Left ventricle myocardium inferior (tissue), 1 donor: ENCODE measurements at regions of chr1 and their contacts with region 1.

Region 1: GRCh38 chr1:221741711-221742554 is at the start of gene DUSP10:
- DNase-seq: peak; percentile 98
- H3K4me3 ChIP-seq: peak within 1 kb of the TSS; percentile 80
- H3K27ac ChIP-seq: peak within 1 kb of the TSS; percentile 98
- H3K4me1 ChIP-seq: peaks cover 38% of the 10 kb centered on the region
- H3K27me3 ChIP-seq: no peaks in the 10 kb centered on the region
- CTCF ChIP-seq: no peak
- total RNA-seq, gene DUSP10: 4.6 TPM

Region 2: GRCh38 chr1:221543529-221544120 is 198.3 kb before region 1 on chr1:
- intact Hi-C with region 1: loop called (anchors 10 kb)
- DNase-seq: no peak
- H3K4me3 ChIP-seq: no peak overlapping the region
- H3K27ac ChIP-seq: no peak overlapping the region
- H3K4me1 ChIP-seq: no peaks in the 10 kb centered on the region
- H3K27me3 ChIP-seq: peaks cover 2% of the 10 kb centered on the region
- CTCF ChIP-seq: peak; percentile 71

Region 3: GRCh38 chr1:221663321-221663720 is 78.6 kb before region 1 on chr1:
- intact Hi-C with region 1: no loop called
- DNase-seq: no peak
- H3K4me3 ChIP-seq: no peak overlapping the region
- H3K27ac ChIP-seq: no peak overlapping the region
- H3K4me1 ChIP-seq: no peaks in the 10 kb centered on the region
- H3K27me3 ChIP-seq: peaks cover 10% of the 10 kb centered on the region
- CTCF ChIP-seq: no peak